ENCODE measurements at regions of chr11 and their contacts with region 1.

Region 1: GRCh38 chr11:7571640-7572000 is 57.8 kb downstream of the PPFIBP2 start:
- DNase-seq: no peak
- H3K4me3 ChIP-seq: no peak overlapping the region
- H3K27ac ChIP-seq: peak overlapping the region in 2 of 4 donors; percentile 34 to 55
- H3K4me1 ChIP-seq: peaks cover 23 to 29% (median 25%) of the 10 kb centered on the region in 4 donors
- H3K27me3 ChIP-seq: peaks cover 0 to 22% (median 0%) of the 10 kb centered on the region in 4 donors
- CTCF ChIP-seq: peak; percentile 81 to 96 (median 82)
- EP300 ChIP-seq: no peak
- POLR2A ChIP-seq: no peak

Region 2: GRCh38 chr11:7490054-7490453 is 81.6 kb before region 1 on chr11:
- intact Hi-C with region 1: no loop called
- DNase-seq: peak; percentile 90
- H3K4me3 ChIP-seq: no peak overlapping the region
- H3K27ac ChIP-seq: peak overlapping the region in 1 of 4 donors; percentile 1
- H3K4me1 ChIP-seq: peaks cover 0 to 5% (median 0%) of the 10 kb centered on the region in 4 donors
- H3K27me3 ChIP-seq: peaks cover 0 to 3% (median 0%) of the 10 kb centered on the region in 4 donors
- CTCF ChIP-seq: no peak
- EP300 ChIP-seq: no peak
- POLR2A ChIP-seq: no peak

Region 3: DNA sequence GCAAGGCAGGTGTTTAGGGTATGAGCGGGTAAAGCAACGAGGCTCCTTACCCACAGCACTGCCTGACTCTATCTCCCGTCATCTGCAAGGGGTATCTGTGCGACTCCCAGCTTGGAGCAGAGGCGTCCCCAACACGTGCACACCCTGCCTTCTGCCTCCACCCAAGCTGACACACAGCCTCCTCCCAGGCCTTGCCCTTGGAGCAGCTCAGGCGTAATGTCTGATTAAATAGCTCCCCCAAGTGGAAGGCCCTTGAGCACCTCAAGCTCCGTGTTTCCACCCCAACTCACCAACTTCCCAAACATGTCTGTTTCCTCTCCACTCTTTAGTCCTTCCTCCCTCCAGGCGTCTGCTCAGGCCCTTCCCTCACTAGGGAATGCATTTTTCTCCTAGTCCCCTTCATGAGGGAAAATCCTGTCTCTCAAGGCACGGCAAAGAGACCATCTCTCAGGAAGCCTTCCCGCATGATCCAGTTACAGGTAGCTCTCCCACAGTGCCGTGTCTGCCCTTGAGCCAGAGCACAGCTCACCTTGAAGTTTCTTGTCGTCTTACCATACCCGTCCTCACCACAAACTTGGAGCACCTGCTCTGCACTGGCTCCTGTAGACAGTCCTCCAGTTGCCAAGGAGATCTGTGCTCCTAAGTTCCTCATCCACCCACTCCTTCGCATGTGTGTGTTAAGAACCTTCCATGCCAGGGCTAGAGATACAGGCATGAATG is 85.8 kb after region 1 on chr11:
- intact Hi-C with region 1: loop called (anchors 2 kb)
- DNase-seq: no peak
- H3K4me3 ChIP-seq: no peak overlapping the region
- H3K27ac ChIP-seq: no peak overlapping the region
- H3K4me1 ChIP-seq: peaks cover 0 to 3% (median 0%) of the 10 kb centered on the region in 4 donors
- H3K27me3 ChIP-seq: no peaks in the 10 kb centered on the region
- CTCF ChIP-seq: peak; percentile 28 to 43 (median 31)
- EP300 ChIP-seq: no peak
- POLR2A ChIP-seq: no peak

Region 4: GRCh38 chr11:7846003-7846402 is 274.4 kb after region 1 on chr11:
- intact Hi-C with region 1: no loop called
- DNase-seq: no peak
- H3K4me3 ChIP-seq: no peak overlapping the region
- H3K27ac ChIP-seq: no peak overlapping the region
- H3K4me1 ChIP-seq: no peaks in the 10 kb centered on the region
- H3K27me3 ChIP-seq: no peaks in the 10 kb centered on the region
- CTCF ChIP-seq: no peak
- EP300 ChIP-seq: no peak
- POLR2A ChIP-seq: no peak